ENCODE measurements at regions of chr4 and their contacts with region 1.

Region 1: DNA sequence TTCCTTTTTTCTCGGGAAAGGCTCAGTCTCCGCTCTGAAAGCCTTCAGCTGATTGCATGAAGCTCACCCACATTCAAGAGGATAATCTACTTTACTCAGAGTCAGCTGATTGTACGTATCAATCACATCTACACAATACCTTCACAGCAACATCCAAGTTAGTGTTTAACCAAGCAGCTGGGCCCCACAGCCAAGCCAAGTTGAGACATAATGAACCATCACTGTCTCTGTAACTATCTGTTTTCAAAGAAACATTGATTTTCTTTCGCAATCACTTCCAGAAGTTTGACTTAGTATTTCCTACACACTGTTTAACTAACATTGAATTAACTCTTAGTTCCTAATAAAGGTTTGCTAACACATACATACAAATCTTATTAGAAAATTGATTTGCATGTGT is 40.3 kb downstream of the RWDD4 start:
- DNase-seq: no peak
- CTCF ChIP-seq: no peak

Region 2: DNA sequence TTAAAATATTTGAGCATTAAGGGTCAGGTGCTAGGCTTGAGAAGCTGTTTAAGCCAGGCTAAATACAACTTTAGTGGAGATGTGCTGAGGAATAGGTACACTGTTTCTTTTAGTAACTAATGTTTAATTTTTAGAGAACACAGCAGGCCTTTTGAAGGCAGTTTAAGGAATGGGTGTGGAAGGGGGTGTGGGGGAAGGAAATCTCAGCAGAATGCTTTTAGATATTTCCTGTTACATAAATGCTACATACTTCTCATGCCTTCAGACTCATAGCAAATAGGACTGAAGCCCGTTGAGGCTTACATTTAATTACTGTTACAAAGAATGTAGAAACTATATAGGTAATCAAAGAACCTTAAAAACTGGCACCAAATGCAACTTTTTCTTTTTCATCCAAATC is 453.3 kb before region 1 on chr4:
- CTCF ChIA-PET with region 1: no interaction called
- POLR2A ChIA-PET with region 1: no interaction called
- DNase-seq: no peak
- CTCF ChIP-seq: no peak

Region 3: GRCh38 chr4:183721207-183722081 is 102.8 kb after region 1 on chr4:
- CTCF ChIA-PET with region 1: interaction called, 11 read pairs
- POLR2A ChIA-PET with region 1: no interaction called
- DNase-seq: peak; percentile 42
- CTCF ChIP-seq: peak; percentile 85